ENCODE measurements at regions of chr10 and their contacts with region 1.

Region 1: DNA sequence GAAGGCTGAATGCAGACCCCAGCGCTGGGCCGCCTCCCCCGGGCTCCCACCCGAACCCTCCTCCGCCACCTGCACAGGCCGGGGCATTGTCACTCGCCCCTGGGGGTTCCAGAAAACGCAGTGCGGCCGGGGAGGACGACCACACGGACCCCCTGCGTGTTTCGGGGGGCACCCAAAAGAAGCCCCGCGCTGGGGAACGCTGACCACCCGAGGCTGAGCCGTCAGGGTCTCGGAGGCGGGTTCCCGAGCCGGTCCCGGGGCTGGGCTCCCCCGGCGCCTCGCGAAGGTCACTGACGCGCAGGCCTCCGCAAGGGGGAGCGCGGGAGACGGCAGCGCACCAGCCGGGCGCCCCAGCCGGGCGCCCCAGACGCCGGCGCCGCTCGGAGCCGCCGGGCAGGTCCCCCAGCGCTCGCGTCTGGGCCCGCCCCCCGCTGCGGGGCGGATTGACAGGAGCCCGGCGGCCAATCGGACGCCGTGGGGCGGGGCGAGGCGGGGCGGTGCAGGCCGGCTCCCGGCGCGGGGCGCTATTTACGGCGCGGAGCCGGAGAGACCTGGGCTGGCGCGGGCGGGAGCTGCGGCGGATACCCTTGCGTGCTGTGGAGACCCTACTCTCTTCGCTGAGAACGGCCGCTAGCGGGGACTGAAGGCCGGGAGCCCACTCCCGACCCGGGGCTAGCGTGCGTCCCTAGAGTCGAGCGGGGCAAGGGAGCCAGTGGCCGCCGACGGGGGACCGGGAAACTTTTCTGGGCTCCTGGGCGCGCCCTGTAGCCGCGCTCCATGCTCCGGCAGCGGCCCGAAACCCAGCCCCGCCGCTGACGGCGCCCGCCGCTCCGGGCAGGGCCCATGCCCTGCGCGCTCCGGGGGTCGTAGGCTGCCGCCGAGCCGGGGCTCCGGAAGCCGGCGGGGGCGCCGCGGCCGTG is at the start of gene BAMBI:
- DNase-seq: peak; percentile 90 to 95 (median 92)
- H3K4me3 ChIP-seq: peak within 1 kb of the TSS; percentile 44 to 94 (median 71)
- H3K27ac ChIP-seq: peak within 1 kb of the TSS in 4 of 5 donors; percentile 63 to 79 (median 72)
- H3K4me1 ChIP-seq: peaks cover 0 to 27% of the 10 kb centered on the region in 2 donors
- H3K27me3 ChIP-seq: no peaks in the 10 kb centered on the region
- CTCF ChIP-seq: peak; percentile 12 to 85 (median 58)
- POLR2A ChIP-seq: peak; percentile 87 to 99
- total RNA-seq, gene BAMBI: 19.5 to 114 (median 86.6) TPM

Region 2: DNA sequence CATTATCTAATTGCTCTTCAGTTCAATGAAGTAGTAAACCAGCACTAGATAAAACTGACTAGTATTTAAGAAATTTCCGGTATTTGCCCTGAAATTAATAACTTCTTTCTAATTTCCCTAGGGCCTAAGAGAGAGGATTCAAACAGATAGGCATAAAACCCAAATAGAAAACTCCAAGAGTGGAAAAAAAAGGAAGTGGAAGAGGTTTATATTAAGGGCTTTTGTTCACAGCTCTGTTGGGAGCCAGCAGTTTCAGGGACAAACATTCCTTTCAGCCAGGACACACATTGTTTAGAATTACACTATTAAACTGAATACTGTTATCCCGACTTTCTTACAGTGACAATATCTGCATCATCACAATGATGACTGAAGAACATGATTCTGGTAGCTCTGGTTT is 681.9 kb before region 1 on chr10:
- intact Hi-C with region 1: no loop called
- DNase-seq: no peak
- H3K4me3 ChIP-seq: no peak overlapping the region
- H3K27ac ChIP-seq: no peak overlapping the region
- H3K4me1 ChIP-seq: peaks cover 0 to 4% of the 10 kb centered on the region in 2 donors
- H3K27me3 ChIP-seq: peaks cover 7% of the 10 kb centered on the region
- CTCF ChIP-seq: no peak
- POLR2A ChIP-seq: no peak

Region 3: GRCh38 chr10:28202941-28203352 is 474.3 kb before region 1 on chr10:
- intact Hi-C with region 1: no loop called
- DNase-seq: peak in 1 of 7 donors; percentile 2
- H3K4me3 ChIP-seq: no peak overlapping the region
- H3K27ac ChIP-seq: no peak overlapping the region
- H3K4me1 ChIP-seq: no peaks in the 10 kb centered on the region
- H3K27me3 ChIP-seq: no peaks in the 10 kb centered on the region
- CTCF ChIP-seq: no peak
- POLR2A ChIP-seq: no peak

Region 4: DNA sequence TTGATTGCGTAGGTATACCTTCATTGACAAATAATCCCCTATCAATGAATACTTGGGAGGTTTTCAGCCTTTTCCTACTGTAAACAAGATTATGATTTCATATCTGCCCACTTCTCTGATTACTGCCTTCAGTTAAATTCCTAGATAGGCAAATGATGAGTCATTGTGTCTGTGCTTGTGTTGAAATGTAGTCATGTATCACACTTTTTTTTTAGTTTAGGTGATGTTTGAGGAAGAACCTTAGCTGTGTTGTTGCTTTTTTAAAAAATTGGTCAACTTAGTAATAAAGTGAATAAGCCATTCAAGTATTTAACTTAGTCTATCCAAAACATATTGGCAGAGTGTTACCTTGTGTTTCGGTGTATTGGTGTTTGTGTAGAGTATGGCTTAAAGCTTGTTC is 84.3 kb before region 1 on chr10:
- intact Hi-C with region 1: no loop called
- DNase-seq: no peak
- H3K4me3 ChIP-seq: no peak overlapping the region
- H3K27ac ChIP-seq: peak overlapping the region in 1 of 5 donors; percentile 45
- H3K4me1 ChIP-seq: peaks cover 13 to 50% of the 10 kb centered on the region in 2 donors
- H3K27me3 ChIP-seq: no peaks in the 10 kb centered on the region
- CTCF ChIP-seq: no peak
- POLR2A ChIP-seq: no peak

Region 5: GRCh38 chr10:28624351-28624750 is 52.9 kb before region 1 on chr10:
- intact Hi-C with region 1: no loop called
- DNase-seq: no peak
- H3K4me3 ChIP-seq: no peak overlapping the region
- H3K27ac ChIP-seq: no peak overlapping the region
- H3K4me1 ChIP-seq: peaks cover 0 to 12% of the 10 kb centered on the region in 2 donors
- H3K27me3 ChIP-seq: no peaks in the 10 kb centered on the region
- CTCF ChIP-seq: no peak
- POLR2A ChIP-seq: no peak

Region 6: GRCh38 chr10:28796606-28797512 is 119.6 kb after region 1 on chr10:
- intact Hi-C with region 1: loop called in 1 of 2 experiments (anchors 10 kb)
- DNase-seq: peak; percentile 64 to 90 (median 78)
- H3K4me3 ChIP-seq: no peak overlapping the region
- H3K27ac ChIP-seq: no peak overlapping the region
- H3K4me1 ChIP-seq: peaks cover 0 to 13% of the 10 kb centered on the region in 2 donors
- H3K27me3 ChIP-seq: no peaks in the 10 kb centered on the region
- CTCF ChIP-seq: no peak
- POLR2A ChIP-seq: no peak

Region 7: DNA sequence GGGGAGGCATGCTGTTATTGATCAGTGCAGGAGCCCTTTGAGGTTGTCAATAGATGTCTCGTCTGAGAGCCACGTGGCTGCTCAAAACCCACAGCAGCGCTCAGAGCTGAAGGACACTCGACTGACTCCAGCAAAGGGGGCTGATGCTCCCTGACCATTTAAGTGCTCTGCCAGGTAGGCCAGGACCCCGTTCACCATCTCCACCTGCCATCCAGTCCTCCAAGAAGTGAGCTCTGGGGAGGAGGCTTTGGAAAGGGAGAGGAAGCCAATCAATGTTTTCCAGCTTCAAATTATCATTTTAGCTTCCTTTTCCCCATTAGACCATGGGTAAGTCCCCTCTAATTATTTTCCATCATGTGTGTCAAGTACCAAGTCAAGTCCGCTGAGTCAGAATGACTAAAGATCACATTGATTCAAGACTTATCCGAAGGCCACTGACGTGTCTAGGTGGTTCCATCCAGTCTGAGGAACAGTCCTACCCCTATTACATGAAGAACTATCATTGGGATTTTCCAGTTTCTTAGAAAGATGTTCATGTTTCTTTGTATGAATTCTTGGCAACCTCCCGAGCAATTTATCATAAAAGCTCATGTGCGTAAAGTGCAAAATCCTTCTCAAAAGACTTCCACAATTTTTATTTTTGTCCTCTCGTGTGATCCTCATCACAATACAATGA is 309.0 kb after region 1 on chr10:
- intact Hi-C with region 1: loop called in 1 of 2 experiments (anchors 5 kb)
- DNase-seq: no peak
- H3K4me3 ChIP-seq: no peak overlapping the region
- H3K27ac ChIP-seq: no peak overlapping the region
- H3K4me1 ChIP-seq: peaks cover 5 to 10% of the 10 kb centered on the region in 2 donors
- H3K27me3 ChIP-seq: no peaks in the 10 kb centered on the region
- CTCF ChIP-seq: no peak
- POLR2A ChIP-seq: no peak

Measured in adrenal gland (tissue), 19 donors.